A549 (cell line): ENCODE measurements at regions of chr12 and their contacts with region 1.

Region 1: DNA sequence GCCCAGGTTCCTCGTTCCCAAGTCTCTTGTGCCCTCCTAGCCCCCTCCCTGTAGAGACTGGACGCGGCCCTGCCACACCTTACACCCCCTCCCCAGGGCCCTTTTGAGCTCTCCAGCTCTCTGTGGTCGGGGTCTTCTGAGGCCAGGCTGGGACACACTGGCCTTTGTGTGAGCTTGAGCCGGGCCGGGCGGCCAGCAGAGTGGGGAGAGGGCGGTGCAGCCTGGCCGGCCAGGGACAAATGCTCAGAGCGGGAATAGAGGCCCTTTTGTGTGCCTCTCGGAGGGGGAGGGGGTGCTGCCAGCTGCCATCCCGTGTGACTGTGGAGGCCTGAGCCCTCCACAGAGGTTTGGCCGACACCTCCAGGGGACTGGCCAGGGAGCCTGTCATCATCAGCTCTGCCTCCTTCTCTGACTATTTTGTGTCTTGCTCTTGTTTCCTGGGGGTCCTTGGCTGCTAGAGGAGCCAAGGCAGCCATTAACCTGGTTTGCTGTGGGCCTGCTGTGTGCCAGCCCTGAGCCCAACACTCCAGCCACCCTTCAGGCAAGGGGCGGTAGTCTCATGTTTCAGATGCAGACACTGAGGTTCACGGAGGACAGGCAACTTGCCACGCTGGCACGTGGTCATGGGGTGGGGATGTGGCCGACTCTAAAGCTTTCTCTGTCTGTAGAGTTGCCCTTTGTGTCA is 13.6 kb downstream of the FAM222A start:
- DNase-seq: no peak
- ATAC-seq: no peak
- H3K4me3 ChIP-seq: no peak overlapping the region
- H3K27ac ChIP-seq: no peak overlapping the region
- H3K4me1 ChIP-seq: no peaks in the 10 kb centered on the region
- CTCF ChIP-seq: no peak
- EP300 ChIP-seq: no peak
- POLR2A ChIP-seq: no peak
- RAD21 ChIP-seq: no peak

Region 2: GRCh38 chr12:109432841-109433304 is 294.3 kb before region 1 on chr12:
- CTCF ChIA-PET with region 1: no interaction called
- POLR2A ChIA-PET with region 1: no interaction called
- DNase-seq: peak; percentile 69 to 89
- ATAC-seq: peak; percentile 92 to 93
- H3K4me3 ChIP-seq: no peak overlapping the region
- H3K27ac ChIP-seq: no peak overlapping the region
- H3K4me1 ChIP-seq: 0 out of 3 replicates have a peak, but pooled peaks cover 3% of the 10 kb centered on the region
- CTCF ChIP-seq: peak; percentile 82
- EP300 ChIP-seq: no peak
- POLR2A ChIP-seq: no peak
- RAD21 ChIP-seq: peak; percentile 54 to 63; a peak in 4 of 5 replicates

Region 3: GRCh38 chr12:109625131-109625559 is 102.0 kb before region 1 on chr12:
- CTCF ChIA-PET with region 1: no interaction called
- POLR2A ChIA-PET with region 1: no interaction called
- DNase-seq: peak; percentile 64 to 71
- ATAC-seq: peak; percentile 81 to 83
- H3K4me3 ChIP-seq: no peak overlapping the region
- H3K27ac ChIP-seq: no peak overlapping the region
- H3K4me1 ChIP-seq: peaks cover 11% of the 10 kb centered on the region; the same call in 1 of the 3 replicates
- CTCF ChIP-seq: no peak
- EP300 ChIP-seq: no peak
- POLR2A ChIP-seq: no peak
- RAD21 ChIP-seq: no peak

Region 4: DNA sequence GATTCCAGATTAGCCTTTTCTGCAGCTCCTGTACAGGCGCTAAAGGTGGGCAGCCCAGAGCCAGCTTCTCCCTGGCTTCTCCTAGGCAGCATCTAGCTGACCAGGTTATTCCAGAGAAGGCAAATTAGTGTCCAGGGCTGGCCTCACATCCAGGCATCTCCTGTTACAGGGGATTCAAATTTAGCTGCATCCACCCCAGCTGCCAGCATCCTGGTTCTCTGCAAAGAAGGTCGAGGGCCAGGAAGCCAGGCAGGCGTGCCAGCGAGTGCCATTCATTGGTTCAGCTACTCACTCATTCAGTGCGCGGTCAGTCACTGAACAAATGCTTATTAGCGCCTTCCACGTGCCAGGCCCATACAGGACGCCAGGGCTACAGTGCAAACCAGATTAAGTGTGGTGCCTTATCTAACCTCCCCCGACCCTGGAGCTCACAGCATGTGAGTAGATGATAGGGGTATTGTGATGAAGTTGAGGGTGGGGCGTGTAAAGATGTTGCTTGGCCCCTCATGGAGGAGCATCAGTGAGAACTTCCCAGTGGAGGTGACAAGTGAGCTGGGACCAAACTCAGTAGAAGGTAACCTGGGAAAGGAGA is 29.2 kb before region 1 on chr12:
- CTCF ChIA-PET with region 1: no interaction called
- POLR2A ChIA-PET with region 1: no interaction called
- DNase-seq: no peak
- ATAC-seq: no peak
- H3K4me3 ChIP-seq: no peak overlapping the region
- H3K27ac ChIP-seq: no peak overlapping the region
- H3K4me1 ChIP-seq: peaks cover 5% of the 10 kb centered on the region; the same call in 1 of the 3 replicates
- CTCF ChIP-seq: no peak
- EP300 ChIP-seq: no peak
- POLR2A ChIP-seq: no peak
- RAD21 ChIP-seq: no peak

Region 5: DNA sequence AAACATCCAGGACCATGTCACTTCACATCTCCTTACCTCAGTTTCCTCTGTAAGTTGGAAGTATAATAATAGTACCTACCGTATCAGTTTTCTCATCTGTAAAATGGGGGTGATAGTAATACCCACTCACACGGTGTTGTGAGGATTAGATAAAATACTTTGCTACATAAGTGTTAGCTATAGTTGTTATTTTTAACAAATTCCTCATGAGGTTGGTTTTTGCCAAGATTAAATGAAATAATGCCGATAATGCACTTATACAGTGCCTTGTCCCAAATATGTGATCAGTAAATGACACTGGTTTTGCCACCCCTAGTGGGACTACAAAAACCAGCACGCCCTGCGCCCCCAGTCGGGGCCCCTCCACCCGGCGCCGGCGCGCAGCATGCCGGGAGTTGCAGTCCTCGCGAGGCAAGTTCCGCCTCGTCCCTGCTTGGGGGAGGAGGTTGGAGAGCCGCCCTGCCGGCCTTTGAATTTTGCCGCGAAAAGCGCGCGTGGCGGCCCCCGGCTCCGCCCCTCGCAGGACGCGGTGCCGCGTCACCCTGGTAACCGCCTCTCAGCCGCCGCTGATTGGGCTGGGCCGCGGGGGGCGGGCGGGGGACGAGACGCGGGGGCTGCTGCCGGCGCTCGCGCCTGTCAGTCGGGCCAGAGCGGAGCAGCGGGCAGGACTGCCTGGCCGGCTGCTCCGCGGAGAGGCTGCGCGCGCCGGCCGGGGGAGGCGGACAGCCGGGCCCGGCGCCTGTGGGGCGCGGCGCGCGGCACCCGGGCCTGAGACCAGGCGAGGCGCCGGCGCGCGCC is 13.8 kb before region 1 on chr12 and contains the start of gene FAM222A:
- CTCF ChIA-PET with region 1: interaction called, 11 read pairs
- POLR2A ChIA-PET with region 1: no interaction called
- DNase-seq: peak; percentile 95 to 97
- ATAC-seq: peak; percentile 77 to 90
- H3K4me3 ChIP-seq: peak within 1 kb of the TSS; percentile 52
- H3K27ac ChIP-seq: peak within 1 kb of the TSS; percentile 47 to 86
- H3K4me1 ChIP-seq: peaks cover 24% of the 10 kb centered on the region
- CTCF ChIP-seq: no peak
- EP300 ChIP-seq: no peak
- POLR2A ChIP-seq: peak; percentile 86
- RAD21 ChIP-seq: no peak
- polyA plus RNA-seq, gene FAM222A: 0.97 and 0.98 TPM in 2 replicates

Region 6: GRCh38 chr12:109783135-109783986 is 56.2 kb after region 1 on chr12:
- CTCF ChIA-PET with region 1: no interaction called
- POLR2A ChIA-PET with region 1: no interaction called
- DNase-seq: no peak
- ATAC-seq: no peak
- H3K4me3 ChIP-seq: no peak overlapping the region
- H3K27ac ChIP-seq: no peak overlapping the region
- H3K4me1 ChIP-seq: no peaks in the 10 kb centered on the region
- CTCF ChIP-seq: no peak
- EP300 ChIP-seq: no peak
- POLR2A ChIP-seq: no peak
- RAD21 ChIP-seq: no peak